ENCODE measurements at regions of chr3 and their contacts with region 1.

Region 1: GRCh38 chr3:153162513-153163346 is 704 bp downstream of the RAP2B start:
- DNase-seq: peak; percentile 59
- H3K4me3 Mint-ChIP-seq: peak overlapping the region; percentile 95
- H3K27ac Mint-ChIP-seq: peak overlapping the region; percentile 99
- H3K4me1 Mint-ChIP-seq: peaks cover 54% of the 10 kb centered on the region
- H3K27me3 Mint-ChIP-seq: peaks cover 5% of the 10 kb centered on the region

Region 2: GRCh38 chr3:152960684-152961083 is 202.0 kb before region 1 on chr3:
- CTCF ChIA-PET with region 1: no interaction called
- DNase-seq: no peak
- H3K4me3 Mint-ChIP-seq: no peak overlapping the region
- H3K27ac Mint-ChIP-seq: no peak overlapping the region
- H3K4me1 Mint-ChIP-seq: no peaks in the 10 kb centered on the region
- H3K27me3 Mint-ChIP-seq: no peaks in the 10 kb centered on the region

Region 3: GRCh38 chr3:153043729-153044328 is 118.9 kb before region 1 on chr3:
- CTCF ChIA-PET with region 1: interaction called, 12 read pairs
- DNase-seq: no peak
- H3K4me3 Mint-ChIP-seq: no peak overlapping the region
- H3K27ac Mint-ChIP-seq: no peak overlapping the region
- H3K4me1 Mint-ChIP-seq: peaks cover 9% of the 10 kb centered on the region
- H3K27me3 Mint-ChIP-seq: peaks cover 6% of the 10 kb centered on the region

Region 4: GRCh38 chr3:153291056-153291685 is 128.4 kb after region 1 on chr3:
- CTCF ChIA-PET with region 1: interaction called, 16 read pairs
- DNase-seq: no peak
- H3K4me3 Mint-ChIP-seq: no peak overlapping the region
- H3K27ac Mint-ChIP-seq: peak overlapping the region; percentile 53
- H3K4me1 Mint-ChIP-seq: peaks cover 42% of the 10 kb centered on the region
- H3K27me3 Mint-ChIP-seq: no peaks in the 10 kb centered on the region

Region 5: GRCh38 chr3:153614563-153614962 is 451.8 kb after region 1 on chr3:
- CTCF ChIA-PET with region 1: no interaction called
- DNase-seq: no peak
- H3K4me3 Mint-ChIP-seq: no peak overlapping the region
- H3K27ac Mint-ChIP-seq: no peak overlapping the region
- H3K4me1 Mint-ChIP-seq: peaks cover 3% of the 10 kb centered on the region
- H3K27me3 Mint-ChIP-seq: no peaks in the 10 kb centered on the region

Measured in activated naive CD4-positive, alpha-beta T cell treated with anti-CD3 and anti-CD28 coated beads, Interleukin-2, amount 10 ng/mL, durations not matched to agents 7 days and 5 days (primary cell).